ENCODE measurements at regions of chr14 and their contacts with region 1.

Region 1: GRCh38 chr14:75002392-75003249 is at the start of gene EIF2B2:
- DNase-seq: peak; percentile 99
- ATAC-seq: peak; percentile 99
- H3K4me3 ChIP-seq: peak within 1 kb of the TSS; percentile 87
- H3K4me1 ChIP-seq: peaks cover 16% of the 10 kb centered on the region
- CTCF ChIP-seq: no peak
- total RNA-seq, gene EIF2B2: 40.6 to 50.9 (median 46.3) TPM

Region 2: GRCh38 chr14:74670726-74671411 is 331.8 kb before region 1 on chr14:
- intact Hi-C with region 1: no loop called
- DNase-seq: no peak
- ATAC-seq: no peak
- H3K4me3 ChIP-seq: no peak overlapping the region
- H3K4me1 ChIP-seq: no peaks in the 10 kb centered on the region
- CTCF ChIP-seq: no peak

Region 3: GRCh38 chr14:74955229-74956026 is 47.2 kb before region 1 on chr14 and contains the start of gene PGF:
- intact Hi-C with region 1: loop called in 1 of 2 experiments (anchors 10 kb)
- DNase-seq: peak; percentile 75 to 83 (median 79)
- ATAC-seq: peak; percentile 89
- H3K4me3 ChIP-seq: no peak within 1 kb of the TSS
- H3K4me1 ChIP-seq: peaks cover 20% of the 10 kb centered on the region
- CTCF ChIP-seq: no peak
- total RNA-seq, gene PGF: 0.96 to 3.1 (median 2.3) TPM

Region 4: DNA sequence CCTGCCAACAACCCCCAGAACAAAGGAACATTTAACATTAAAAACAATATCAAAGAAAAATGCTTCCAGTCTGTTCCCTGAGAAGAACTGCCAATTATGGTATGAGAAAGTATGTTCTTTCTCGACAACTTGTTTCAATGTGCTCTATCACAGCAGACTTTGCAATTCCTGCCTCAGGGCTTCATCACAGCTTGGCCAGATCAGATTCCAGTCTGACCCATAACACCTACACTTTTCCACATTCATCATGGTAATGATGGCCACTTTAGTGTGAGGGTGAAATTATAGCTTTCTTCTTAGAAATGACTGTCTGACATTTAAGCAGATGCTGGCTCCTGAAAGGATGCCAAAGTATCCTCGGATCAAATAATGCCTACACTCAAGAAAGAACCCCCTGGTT is 107.3 kb after region 1 on chr14:
- intact Hi-C with region 1: no loop called
- DNase-seq: no peak
- ATAC-seq: no peak
- H3K4me3 ChIP-seq: no peak overlapping the region
- H3K4me1 ChIP-seq: no peaks in the 10 kb centered on the region
- CTCF ChIP-seq: no peak